ENCODE measurements at regions of chrX and their contacts with region 1.

Region 1: DNA sequence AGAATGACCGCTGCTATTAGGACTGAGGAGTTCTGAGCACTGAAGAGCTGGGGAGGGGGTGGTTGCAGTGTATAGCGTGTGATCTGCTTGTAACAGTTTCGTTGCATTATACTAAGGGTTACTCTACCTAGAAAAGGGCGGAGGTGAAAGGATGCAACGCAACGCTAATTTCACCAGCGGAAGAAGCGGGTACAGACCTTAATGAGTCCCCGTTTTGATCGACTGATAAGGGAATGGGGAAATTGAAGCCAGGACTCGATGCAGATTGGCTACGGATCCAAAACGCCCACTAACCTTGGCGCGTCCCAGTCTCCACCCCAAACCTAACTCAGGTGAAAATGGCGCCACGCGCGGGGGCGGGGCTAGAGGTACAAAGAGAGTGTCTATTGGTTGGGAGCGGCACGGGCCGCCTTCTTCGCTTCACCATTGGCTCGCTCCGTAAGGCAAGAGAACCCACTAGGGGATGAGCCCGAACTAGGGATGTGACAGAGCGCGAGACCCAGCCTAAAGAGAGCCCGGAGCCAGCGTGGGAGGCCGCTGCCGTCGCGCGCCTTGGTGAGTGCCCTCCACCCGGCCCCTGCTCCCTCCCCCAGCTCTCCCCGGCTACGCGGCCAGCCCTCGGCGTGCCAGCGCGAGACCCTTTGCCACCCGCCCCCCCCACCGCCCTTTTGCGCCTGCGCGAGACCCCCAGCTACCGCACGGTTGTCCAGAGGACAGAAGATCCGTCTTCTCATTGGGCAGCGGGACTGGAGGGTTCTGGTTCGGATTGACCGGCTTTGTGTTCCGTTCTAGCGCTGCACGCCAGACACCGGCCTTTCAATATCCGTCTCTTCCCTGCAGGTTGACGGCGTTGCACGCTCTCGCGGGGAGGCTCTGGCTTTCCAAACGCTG is at the start of gene EBP:
- DNase-seq: peak; percentile 98
- H3K4me3 Mint-ChIP-seq: peak within 1 kb of the TSS; percentile 90
- H3K27ac Mint-ChIP-seq: peak within 1 kb of the TSS; percentile 94
- H3K4me1 Mint-ChIP-seq: peaks cover 21% of the 10 kb centered on the region
- H3K27me3 Mint-ChIP-seq: no peaks in the 10 kb centered on the region
- total RNA-seq, gene EBP: 159 and 163 TPM in 2 replicates

Region 2: GRCh38 chrX:48456628-48457331 is 64.8 kb before region 1 on chrX:
- intact Hi-C with region 1: no loop called
- DNase-seq: no peak
- H3K4me3 Mint-ChIP-seq: no peak overlapping the region
- H3K27ac Mint-ChIP-seq: no peak overlapping the region
- H3K4me1 Mint-ChIP-seq: peaks cover 8% of the 10 kb centered on the region
- H3K27me3 Mint-ChIP-seq: no peaks in the 10 kb centered on the region

Region 3: GRCh38 chrX:48508400-48509244 is 13.0 kb before region 1 on chrX and contains the start of gene PORCN:
- intact Hi-C with region 1: loop called (anchors 1 kb)
- DNase-seq: peak; percentile 93
- H3K4me3 Mint-ChIP-seq: peak within 1 kb of the TSS; percentile 92
- H3K27ac Mint-ChIP-seq: peak within 1 kb of the TSS; percentile 91
- H3K4me1 Mint-ChIP-seq: peaks cover 19% of the 10 kb centered on the region
- H3K27me3 Mint-ChIP-seq: peaks cover 3% of the 10 kb centered on the region
- total RNA-seq, gene PORCN: 11.5 and 12.9 TPM in 2 replicates

Region 4: GRCh38 chrX:48539345-48540027 is 17.9 kb after region 1 on chrX and contains the start of gene TBC1D25:
- intact Hi-C with region 1: loop called (anchors 1 kb)
- DNase-seq: peak; percentile 98
- H3K4me3 Mint-ChIP-seq: peak within 1 kb of the TSS; percentile 88
- H3K27ac Mint-ChIP-seq: peak within 1 kb of the TSS; percentile 96
- H3K4me1 Mint-ChIP-seq: peaks cover 17% of the 10 kb centered on the region
- H3K27me3 Mint-ChIP-seq: no peaks in the 10 kb centered on the region
- total RNA-seq, gene TBC1D25: 14.0 and 15.9 TPM in 2 replicates

Region 5: DNA sequence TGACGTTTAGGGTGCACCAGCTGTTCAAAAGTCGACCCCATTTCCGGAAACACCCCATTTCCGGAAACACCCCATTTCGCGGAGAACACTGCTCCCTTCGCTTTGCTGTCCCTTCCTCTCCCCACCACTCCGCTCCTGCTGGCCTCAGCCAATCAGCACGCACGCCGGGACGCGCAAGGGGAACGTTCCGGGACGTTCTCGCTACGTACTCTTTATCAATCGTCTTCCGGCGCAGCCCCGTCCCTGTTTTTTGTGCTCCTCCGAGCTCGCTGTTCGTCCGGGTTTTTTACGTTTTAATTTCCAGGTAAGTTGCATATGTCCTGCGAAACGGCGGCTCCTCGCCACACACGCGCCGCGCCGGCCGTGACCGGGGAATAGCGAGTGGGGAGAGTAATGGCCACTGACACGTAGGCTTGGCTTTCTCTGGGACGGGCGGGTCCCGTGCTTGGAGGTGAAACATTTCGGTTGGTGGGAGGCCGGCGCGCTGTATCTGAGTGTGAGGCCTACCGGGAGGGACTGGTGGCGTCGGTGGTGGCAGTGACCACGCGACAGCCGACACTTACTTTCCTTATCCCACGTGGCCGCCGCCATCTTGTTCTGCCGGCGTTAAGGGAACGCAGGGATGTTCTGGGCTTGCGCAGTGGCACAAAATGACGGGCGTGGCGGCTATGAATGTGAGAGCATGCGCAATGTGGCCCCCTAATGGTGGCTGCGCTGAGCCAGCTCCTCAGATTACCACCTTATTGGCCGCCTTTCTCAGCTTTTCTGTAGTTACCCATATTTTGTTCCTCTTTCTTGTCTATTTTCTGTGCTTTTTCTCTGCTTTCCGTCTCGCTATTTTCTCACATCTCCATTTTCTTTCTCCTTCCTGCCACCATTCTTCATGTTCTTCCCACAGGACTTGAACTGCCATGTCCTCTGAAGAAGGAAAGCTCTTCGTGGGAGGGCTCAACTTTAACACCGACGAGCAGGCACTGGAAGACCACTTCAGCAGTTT is 53.0 kb after region 1 on chrX and contains the start of gene RBM3:
- intact Hi-C with region 1: loop called (anchors 1 kb)
- DNase-seq: peak; percentile 97
- H3K4me3 Mint-ChIP-seq: peak within 1 kb of the TSS; percentile 94
- H3K27ac Mint-ChIP-seq: peak within 1 kb of the TSS; percentile 100
- H3K4me1 Mint-ChIP-seq: peaks cover 14% of the 10 kb centered on the region
- H3K27me3 Mint-ChIP-seq: no peaks in the 10 kb centered on the region
- total RNA-seq, gene RBM3: 317 and 318 TPM in 2 replicates